Mucosa of descending colon (tissue), 3 donors: ENCODE measurements at regions of chr21 and their contacts with region 1.

Region 1: GRCh38 chr21:38913120-38913892 is 107.6 kb downstream of the ETS2 start:
- DNase-seq: peak; percentile 92 to 94 (median 93)
- ATAC-seq: peak; percentile 79
- H3K4me3 ChIP-seq: no peak overlapping the region
- H3K4me1 ChIP-seq: peaks cover 56% of the 10 kb centered on the region
- CTCF ChIP-seq: no peak

Region 2: DNA sequence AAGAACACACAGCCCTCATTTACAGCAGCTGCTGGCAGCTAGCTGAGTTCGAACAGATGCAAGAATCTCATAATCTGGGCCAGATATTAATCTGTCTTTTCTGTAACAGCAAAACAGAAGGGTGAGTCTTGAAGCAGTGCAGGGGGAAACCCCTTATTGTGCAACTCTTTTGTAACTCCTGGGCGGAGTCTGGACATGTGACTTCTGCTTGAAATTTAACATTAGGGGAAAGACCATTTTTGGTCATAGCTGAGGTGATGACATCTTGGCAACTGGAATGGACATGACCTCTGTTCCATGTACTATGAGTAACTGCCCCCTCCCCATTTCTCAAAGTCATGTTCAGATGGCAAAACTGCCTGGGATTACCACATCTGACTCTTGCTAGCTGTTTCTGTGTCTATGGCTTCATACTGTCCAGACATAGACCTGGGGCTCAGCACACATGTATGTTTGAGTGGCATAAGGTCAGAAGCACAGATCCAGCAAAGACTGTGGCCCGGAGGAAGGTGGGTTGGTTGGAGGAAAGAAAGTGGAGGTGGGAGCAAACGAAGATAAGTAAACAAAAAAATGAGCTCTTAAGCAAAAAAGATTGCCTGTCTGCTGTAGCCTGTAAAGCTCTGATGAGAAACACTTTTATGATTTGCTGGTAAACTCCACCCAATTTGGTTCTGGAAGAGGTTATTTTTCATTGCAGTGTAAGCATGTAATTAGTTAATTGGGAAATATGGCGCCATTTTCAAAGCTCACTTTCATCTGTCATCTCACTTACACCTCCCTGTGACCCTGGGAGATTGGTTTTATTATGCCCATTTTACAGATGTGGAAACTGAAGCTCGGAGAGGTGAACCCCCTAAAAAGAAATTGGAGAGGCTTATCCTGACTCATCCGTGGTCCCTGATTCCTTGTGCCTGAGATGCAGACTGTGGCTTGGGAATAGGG is 81.5 kb before region 1 on chr21:
- intact Hi-C with region 1: loop called in 1 of 2 experiments (anchors 10 kb)
- DNase-seq: peak in 1 of 3 donors; percentile 79
- ATAC-seq: peak; percentile 90
- H3K4me3 ChIP-seq: no peak overlapping the region
- H3K4me1 ChIP-seq: peaks cover 7% of the 10 kb centered on the region
- CTCF ChIP-seq: no peak

Region 3: GRCh38 chr21:38950435-38951094 is 37.3 kb after region 1 on chr21:
- intact Hi-C with region 1: loop called in 1 of 2 experiments (anchors 5 kb)
- DNase-seq: peak in 1 of 3 donors; percentile 87
- ATAC-seq: peak; percentile 88
- H3K4me3 ChIP-seq: peak overlapping the region; percentile 7
- H3K4me1 ChIP-seq: peaks cover 6% of the 10 kb centered on the region
- CTCF ChIP-seq: no peak